Transverse colon (tissue), 4 donors: ENCODE measurements at regions of chr1 and their contacts with region 1.

Region 1: DNA sequence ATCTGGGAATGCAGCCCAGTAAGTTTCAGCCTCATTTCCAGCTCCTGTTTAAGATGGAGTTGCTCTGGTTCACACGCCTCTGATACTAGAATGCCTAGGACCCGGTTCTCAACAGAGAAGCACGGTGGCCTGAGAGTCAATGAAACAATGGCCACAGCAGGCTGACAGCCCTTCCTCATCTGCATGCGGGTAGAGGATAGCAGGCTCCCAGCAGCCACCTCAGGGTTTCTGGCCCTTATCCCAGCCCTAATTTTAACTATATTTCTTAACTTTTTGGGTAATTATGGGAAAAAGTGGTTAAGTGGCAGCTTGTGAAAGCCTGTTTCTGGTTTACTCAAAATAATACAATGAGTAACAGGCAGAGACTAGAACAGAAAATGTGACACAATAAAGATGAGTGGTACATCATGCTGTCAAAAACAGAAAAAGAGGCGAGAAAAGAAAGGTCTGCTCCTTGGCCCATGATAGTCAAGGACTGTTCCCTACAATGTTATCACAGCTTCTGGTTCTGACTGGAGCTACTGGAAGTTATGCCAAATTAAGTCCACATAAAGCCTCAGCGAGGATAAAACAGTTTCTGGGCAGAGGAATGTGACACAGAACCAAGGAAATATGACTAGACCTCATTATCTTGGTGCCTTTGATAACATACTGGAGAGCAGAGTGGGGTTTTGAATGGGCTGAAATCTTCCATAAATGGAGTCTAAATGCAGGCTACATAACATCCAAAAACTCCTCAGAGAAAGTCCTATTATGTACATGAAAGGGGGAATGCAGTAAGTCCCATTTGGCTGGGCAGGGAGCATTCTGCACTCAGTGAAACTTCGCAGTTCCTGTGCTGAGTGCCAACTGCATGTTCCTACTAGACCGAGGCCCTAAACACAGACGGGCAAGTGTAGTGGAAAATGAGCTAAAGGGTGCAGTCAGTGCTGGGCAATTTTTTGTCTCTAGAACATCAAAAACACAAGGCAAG is 92.1 kb downstream of the NIBAN1 start:
- DNase-seq: peak; percentile 23
- H3K4me3 ChIP-seq: no peak overlapping the region
- H3K27ac ChIP-seq: peak overlapping the region; percentile 57 to 82 (median 74)
- H3K4me1 ChIP-seq: peaks cover 8 to 32% (median 11%) of the 10 kb centered on the region in 4 donors
- H3K27me3 ChIP-seq: no peaks in the 10 kb centered on the region
- CTCF ChIP-seq: no peak
- EP300 ChIP-seq: no peak
- POLR2A ChIP-seq: no peak

Region 2: DNA sequence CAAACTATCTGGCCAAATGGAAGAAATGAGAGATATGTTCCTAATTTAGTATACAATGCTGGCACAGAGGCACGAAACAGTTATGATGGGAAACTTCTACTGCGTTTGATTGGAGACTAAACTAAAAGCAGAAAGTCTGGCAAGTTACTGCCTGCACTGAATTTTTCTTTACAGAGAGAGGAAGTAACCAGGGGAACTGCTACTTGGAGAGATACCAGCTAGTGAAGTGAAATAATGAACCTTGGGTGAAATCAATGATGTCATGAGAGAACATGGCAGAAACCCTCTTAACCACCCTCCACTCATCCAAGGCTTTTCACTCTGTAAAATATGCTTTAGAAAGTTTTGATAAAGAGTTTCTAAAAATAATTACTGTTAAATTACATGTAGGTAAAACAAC is 62.8 kb after region 1 on chr1:
- in situ Hi-C with region 1: no loop called
- intact Hi-C with region 1: no loop called
- DNase-seq: no peak
- H3K4me3 ChIP-seq: no peak overlapping the region
- H3K27ac ChIP-seq: peak overlapping the region; percentile 33 to 54 (median 49)
- H3K4me1 ChIP-seq: peaks cover 0 to 36% (median 0%) of the 10 kb centered on the region in 4 donors
- H3K27me3 ChIP-seq: peaks cover 3% of the 10 kb centered on the region
- CTCF ChIP-seq: no peak
- EP300 ChIP-seq: no peak
- POLR2A ChIP-seq: no peak

Region 3: DNA sequence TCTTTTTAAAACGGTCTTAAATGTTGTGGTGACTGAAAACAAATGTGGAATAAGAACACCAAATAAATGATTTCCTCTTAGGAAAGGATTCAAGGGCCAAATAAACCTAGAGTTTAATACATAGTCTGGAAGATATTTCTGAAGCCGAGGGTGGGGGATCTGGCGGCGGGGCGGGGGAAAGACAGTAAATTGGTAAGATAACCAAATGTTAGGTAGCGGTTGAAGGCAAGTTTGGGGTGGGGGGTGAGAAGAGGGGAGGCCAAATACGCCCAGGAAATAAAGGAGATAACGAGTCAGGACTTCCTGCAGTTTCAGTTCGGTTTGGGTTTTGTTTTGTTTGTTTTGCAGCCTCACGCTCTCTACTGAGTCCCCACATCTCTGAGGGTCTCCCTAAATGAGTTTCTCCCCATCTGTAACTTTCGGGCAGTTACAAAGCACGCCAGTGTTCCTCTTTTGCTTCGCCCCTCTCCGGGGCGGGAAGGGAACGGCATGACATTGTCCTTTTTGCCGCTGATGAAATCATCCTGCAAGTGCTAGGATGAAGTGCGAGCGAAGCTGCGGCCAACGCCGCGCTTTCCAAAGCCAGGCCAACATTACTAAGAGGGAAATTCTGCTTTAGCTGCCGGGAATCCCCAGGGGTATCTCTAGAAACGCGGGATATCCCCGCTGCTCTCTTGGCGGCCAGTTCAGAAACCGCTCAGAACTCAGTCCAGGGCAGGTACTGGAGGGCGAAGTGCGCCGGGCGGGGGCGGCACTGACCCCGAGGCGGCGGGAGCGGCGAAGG is 91.2 kb after region 1 on chr1:
- in situ Hi-C with region 1: no loop called
- intact Hi-C with region 1: loop called (anchors 5 kb)
- DNase-seq: peak; percentile 37
- H3K4me3 ChIP-seq: peak overlapping the region; percentile 47 to 61 (median 54)
- H3K27ac ChIP-seq: peak overlapping the region; percentile 72 to 89 (median 84)
- H3K4me1 ChIP-seq: peaks cover 0 to 18% (median 5%) of the 10 kb centered on the region in 4 donors
- H3K27me3 ChIP-seq: peaks cover 54% of the 10 kb centered on the region
- CTCF ChIP-seq: no peak
- EP300 ChIP-seq: no peak
- POLR2A ChIP-seq: no peak

Region 4: DNA sequence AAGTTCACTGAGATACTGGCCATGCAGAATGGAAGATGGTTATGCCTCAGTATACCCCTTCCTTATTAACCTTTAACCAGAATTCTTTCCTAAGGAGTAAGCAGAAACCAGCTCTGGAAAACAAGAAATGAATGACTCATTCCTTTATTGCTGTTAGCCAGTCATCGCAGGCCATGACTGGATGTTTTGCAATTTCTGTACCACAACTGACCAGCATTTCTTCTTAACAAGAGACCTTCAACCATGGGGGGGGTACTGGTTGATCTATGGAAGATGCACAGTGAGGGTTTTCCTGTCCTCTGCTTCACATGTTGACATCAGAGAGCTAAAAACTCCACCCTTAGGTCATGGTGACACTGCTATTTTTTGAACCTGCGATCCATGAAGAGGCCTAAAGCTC is 135.1 kb after region 1 on chr1:
- in situ Hi-C with region 1: no loop called
- intact Hi-C with region 1: no loop called
- DNase-seq: no peak
- H3K4me3 ChIP-seq: no peak overlapping the region
- H3K27ac ChIP-seq: no peak overlapping the region
- H3K4me1 ChIP-seq: peaks cover 0 to 5% (median 0%) of the 10 kb centered on the region in 4 donors
- H3K27me3 ChIP-seq: no peaks in the 10 kb centered on the region
- CTCF ChIP-seq: no peak
- EP300 ChIP-seq: no peak
- POLR2A ChIP-seq: no peak